ENCODE measurements at regions of chr15 and their contacts with region 1.

Region 1: GRCh38 chr15:77597802-77598453 is 34.8 kb downstream of the LINGO1 start:
- DNase-seq: no peak
- H3K4me3 ChIP-seq: no peak overlapping the region
- CTCF ChIP-seq: no peak
- POLR2A ChIP-seq: no peak

Region 2: GRCh38 chr15:77514635-77515402 is 83.1 kb before region 1 on chr15:
- intact Hi-C with region 1: no loop called
- DNase-seq: peak in 1 of 2 donors; percentile 77
- H3K4me3 ChIP-seq: no peak overlapping the region
- CTCF ChIP-seq: no peak
- POLR2A ChIP-seq: no peak

Region 3: DNA sequence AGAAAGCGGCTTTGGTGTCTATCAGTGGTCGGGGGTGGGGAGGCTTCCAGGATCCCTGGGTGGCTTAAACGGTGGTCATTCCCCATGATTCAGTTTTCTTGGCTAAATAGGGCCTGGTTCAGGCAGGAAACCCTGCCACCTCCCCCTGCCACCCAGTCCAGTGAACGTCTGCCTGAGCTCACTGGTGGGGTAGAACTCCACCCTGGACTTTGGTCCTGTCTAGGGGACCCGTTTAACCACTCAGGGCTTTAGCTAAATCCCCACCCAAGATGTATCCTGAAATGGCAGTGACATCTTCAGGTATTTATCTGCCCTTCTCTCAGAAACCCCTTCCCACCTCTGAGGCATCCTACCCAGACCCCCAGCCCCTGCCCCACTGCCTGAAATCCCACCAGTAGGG is 65.3 kb after region 1 on chr15:
- intact Hi-C with region 1: loop called (anchors 2 kb)
- DNase-seq: no peak
- H3K4me3 ChIP-seq: no peak overlapping the region
- CTCF ChIP-seq: no peak
- POLR2A ChIP-seq: no peak

Region 4: GRCh38 chr15:79257454-79257853 is 1659.5 kb after region 1 on chr15:
- intact Hi-C with region 1: no loop called
- DNase-seq: peak in 1 of 2 donors; percentile 49
- H3K4me3 ChIP-seq: no peak overlapping the region
- CTCF ChIP-seq: no peak
- POLR2A ChIP-seq: no peak